Caco-2 (cell line): ENCODE measurements at regions of chr2 and their contacts with region 1.

Region 1: DNA sequence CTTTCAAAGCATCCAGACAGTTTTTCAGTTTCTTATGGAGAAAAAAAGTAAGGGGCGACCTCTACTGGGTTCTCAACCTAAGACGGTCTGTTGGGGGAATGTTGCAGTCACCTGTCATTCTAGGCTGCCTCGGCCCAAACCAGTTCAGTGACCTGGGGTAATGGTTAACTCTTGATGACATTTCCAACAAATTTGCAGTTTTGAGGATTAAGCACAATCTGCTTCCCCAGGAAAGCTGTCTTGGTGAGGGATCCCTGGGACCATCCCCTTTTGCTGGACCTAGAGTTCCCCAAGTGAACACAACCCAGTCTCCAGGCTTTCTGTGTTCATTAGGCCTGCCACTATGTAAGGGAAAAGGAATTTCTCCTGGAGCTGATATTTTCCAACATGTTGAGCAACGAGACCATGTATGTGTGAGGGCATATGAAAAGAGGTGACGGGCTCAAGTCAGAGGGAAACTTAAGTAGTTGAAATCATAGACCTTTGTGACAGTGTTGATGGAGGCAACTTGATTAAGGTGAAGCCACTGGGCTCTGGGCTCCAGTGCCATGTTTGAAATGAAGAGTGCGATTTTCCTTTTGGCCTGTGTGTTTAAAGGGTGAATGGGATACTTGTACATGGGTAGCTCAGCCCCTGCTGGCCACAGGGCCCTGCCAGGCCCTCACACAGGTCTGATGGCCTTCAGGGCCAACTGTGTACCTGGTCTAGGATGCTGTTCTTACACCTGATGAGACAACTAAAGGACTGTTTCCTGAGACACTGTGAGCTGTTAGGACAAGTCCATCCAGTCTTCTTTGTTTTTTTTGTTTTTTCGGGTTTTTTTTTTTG is 27.0 kb downstream of the FOSL2 start:
- DNase-seq: peak; percentile 85 to 86
- H3K4me3 ChIP-seq: no peak overlapping the region
- H3K4me3 Mint-ChIP-seq: peak overlapping the region; percentile 52
- H3K27ac Mint-ChIP-seq: peak overlapping the region; percentile 93
- H3K4me1 ChIP-seq: peaks cover 23% of the 10 kb centered on the region
- H3K4me1 Mint-ChIP-seq: peaks cover 19% of the 10 kb centered on the region
- H3K27me3 ChIP-seq: no peaks in the 10 kb centered on the region
- H3K27me3 Mint-ChIP-seq: no peaks in the 10 kb centered on the region
- CTCF ChIP-seq: peak; percentile 32 to 47

Region 2: DNA sequence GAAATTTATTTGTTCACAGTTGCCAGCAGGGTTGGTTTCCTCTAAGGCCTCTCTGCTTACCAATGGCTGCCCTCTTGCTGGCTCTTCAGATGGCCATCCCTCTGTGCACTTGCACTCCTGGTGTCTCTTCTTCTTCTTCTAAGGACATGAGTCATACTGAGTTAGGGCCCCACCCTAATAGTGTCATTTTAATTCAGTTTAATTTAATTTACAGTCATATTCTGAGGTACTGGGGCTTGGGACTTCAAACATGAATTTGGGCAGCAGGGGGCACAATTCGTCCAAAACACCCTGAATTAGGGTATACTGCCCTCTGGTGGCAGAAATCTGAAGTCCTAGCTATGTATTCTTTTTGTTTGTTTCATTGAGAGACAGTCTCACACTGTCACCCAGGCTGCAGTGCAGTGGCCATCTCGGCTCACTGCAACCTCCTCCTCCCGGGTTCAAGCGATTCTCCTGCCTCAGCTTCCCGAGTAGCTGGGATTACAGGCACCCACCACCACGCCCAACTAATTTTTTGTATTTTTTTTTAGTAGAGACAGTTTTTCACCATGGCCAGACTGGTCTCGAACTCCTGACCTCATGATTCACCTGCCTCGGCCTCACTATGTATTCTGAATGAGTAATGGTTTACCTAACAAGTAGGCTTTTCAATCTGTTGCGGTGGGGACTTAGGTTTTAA is 736.1 kb before region 1 on chr2:
- CTCF ChIA-PET with region 1: interaction called, 11 read pairs
- POLR2A ChIA-PET with region 1: no interaction called
- intact Hi-C with region 1: no loop called
- DNase-seq: peak; percentile 82 to 93
- H3K4me3 ChIP-seq: no peak overlapping the region
- H3K4me3 Mint-ChIP-seq: no peak overlapping the region
- H3K27ac Mint-ChIP-seq: peak overlapping the region; percentile 81
- H3K4me1 ChIP-seq: peaks cover 28% of the 10 kb centered on the region
- H3K4me1 Mint-ChIP-seq: peaks cover 14% of the 10 kb centered on the region
- H3K27me3 ChIP-seq: no peaks in the 10 kb centered on the region
- H3K27me3 Mint-ChIP-seq: no peaks in the 10 kb centered on the region
- CTCF ChIP-seq: peak; percentile 99 to 100

Region 3: GRCh38 chr2:27723372-27724144 is 696.1 kb before region 1 on chr2:
- CTCF ChIA-PET with region 1: interaction called, 4 read pairs
- POLR2A ChIA-PET with region 1: no interaction called
- intact Hi-C with region 1: loop called (anchors 1 kb)
- DNase-seq: peak; percentile 78 to 81
- H3K4me3 ChIP-seq: no peak overlapping the region
- H3K4me3 Mint-ChIP-seq: no peak overlapping the region
- H3K27ac Mint-ChIP-seq: peak overlapping the region; percentile 80
- H3K4me1 ChIP-seq: peaks cover 60% of the 10 kb centered on the region
- H3K4me1 Mint-ChIP-seq: peaks cover 48% of the 10 kb centered on the region
- H3K27me3 ChIP-seq: no peaks in the 10 kb centered on the region
- H3K27me3 Mint-ChIP-seq: no peaks in the 10 kb centered on the region
- CTCF ChIP-seq: peak; percentile 85 to 87

Region 4: DNA sequence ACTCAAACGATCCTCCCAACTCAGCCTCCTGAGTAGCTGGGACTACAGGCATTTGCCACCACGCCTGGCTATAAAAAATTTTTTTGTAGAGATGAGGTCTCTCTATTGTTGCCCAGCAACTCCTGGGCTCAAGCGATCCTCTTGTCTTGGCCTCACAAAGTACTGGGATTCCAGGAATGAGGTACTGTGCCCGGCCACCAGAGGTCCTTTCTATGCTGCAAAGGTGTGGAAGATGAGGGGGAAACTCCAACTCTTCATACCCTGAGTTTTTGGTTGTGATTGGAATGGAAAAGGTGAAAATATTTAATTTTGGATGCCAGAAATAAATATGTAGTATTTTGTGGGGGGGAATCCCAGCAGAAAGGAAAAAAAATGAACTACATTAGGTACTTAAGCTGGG is 612.2 kb before region 1 on chr2:
- CTCF ChIA-PET with region 1: no interaction called
- POLR2A ChIA-PET with region 1: no interaction called
- intact Hi-C with region 1: loop called (anchors 1 kb)
- DNase-seq: peak; percentile 55 to 59
- H3K4me3 ChIP-seq: no peak overlapping the region
- H3K4me3 Mint-ChIP-seq: no peak overlapping the region
- H3K27ac Mint-ChIP-seq: no peak overlapping the region
- H3K4me1 ChIP-seq: peaks cover 16% of the 10 kb centered on the region; the same call in 1 of the 2 replicates
- H3K4me1 Mint-ChIP-seq: no peaks in the 10 kb centered on the region
- H3K27me3 ChIP-seq: no peaks in the 10 kb centered on the region
- H3K27me3 Mint-ChIP-seq: no peaks in the 10 kb centered on the region
- CTCF ChIP-seq: peak; percentile 48 to 66

Region 5: DNA sequence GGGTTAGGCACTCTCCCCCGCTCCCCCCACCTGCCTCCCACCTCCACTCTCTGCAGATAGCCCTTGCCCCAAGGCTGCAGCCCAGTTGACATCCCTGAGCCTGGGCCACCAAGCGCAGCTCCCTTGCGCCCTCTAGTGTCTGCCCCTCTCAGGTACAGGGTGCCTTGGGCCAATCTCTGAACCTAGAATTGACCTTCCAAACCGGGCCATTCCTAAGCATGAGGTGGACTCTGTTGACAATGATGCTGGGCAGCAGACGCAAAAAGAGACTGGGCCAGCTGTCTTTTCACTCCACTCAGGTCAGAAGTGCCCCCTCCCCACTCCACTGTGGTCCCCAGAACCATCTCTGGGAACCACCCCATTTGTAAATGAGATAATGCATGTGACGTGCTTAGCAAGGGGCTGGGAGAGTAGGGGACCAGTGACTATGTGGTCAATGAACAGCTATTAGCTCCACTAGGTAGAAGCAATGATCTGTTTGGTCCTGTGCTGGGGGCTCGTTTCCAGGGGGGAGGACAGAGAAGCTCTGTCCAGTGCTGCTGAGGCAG is 33.0 kb after region 1 on chr2:
- CTCF ChIA-PET with region 1: interaction called, 3 read pairs
- POLR2A ChIA-PET with region 1: interaction called, 5 read pairs
- intact Hi-C with region 1: loop called (anchors 1 kb)
- DNase-seq: peak; percentile 72 to 84
- H3K4me3 ChIP-seq: no peak overlapping the region
- H3K4me3 Mint-ChIP-seq: no peak overlapping the region
- H3K27ac Mint-ChIP-seq: no peak overlapping the region
- H3K4me1 ChIP-seq: 0 out of 2 replicates have a peak, but pooled peaks cover 4% of the 10 kb centered on the region
- H3K4me1 Mint-ChIP-seq: peaks cover 13% of the 10 kb centered on the region
- H3K27me3 ChIP-seq: no peaks in the 10 kb centered on the region
- H3K27me3 Mint-ChIP-seq: no peaks in the 10 kb centered on the region
- CTCF ChIP-seq: peak; percentile 90 to 94

Region 6: GRCh38 chr2:29014811-29015421 is 595.3 kb after region 1 on chr2:
- CTCF ChIA-PET with region 1: no interaction called
- POLR2A ChIA-PET with region 1: no interaction called
- intact Hi-C with region 1: no loop called
- DNase-seq: no peak
- H3K4me3 ChIP-seq: no peak overlapping the region
- H3K4me3 Mint-ChIP-seq: no peak overlapping the region
- H3K27ac Mint-ChIP-seq: no peak overlapping the region
- H3K4me1 ChIP-seq: no peaks in the 10 kb centered on the region
- H3K4me1 Mint-ChIP-seq: no peaks in the 10 kb centered on the region
- H3K27me3 ChIP-seq: no peaks in the 10 kb centered on the region
- H3K27me3 Mint-ChIP-seq: no peaks in the 10 kb centered on the region
- CTCF ChIP-seq: no peak

Region 7: DNA sequence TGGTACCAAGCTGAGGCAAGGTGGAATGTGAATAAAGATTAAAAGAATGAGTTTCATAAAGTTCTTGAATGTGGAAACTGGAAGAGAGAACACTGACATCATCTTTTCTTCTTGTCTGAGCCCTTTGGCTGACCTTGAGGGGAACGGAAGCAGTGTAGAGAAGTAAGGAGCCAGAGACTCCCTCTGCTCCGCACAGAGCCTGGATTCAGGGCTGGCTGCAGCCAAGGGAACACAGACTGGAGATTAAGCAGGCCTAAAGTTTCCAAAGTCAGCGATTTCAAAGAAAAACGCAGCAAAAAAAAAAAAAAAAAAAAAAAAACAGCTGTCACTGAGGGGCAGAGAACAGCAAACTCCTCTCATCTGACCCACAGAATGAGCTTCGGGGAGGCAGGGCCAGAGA is 1521.0 kb after region 1 on chr2:
- CTCF ChIA-PET with region 1: no interaction called
- POLR2A ChIA-PET with region 1: no interaction called
- intact Hi-C with region 1: no loop called
- DNase-seq: no peak
- H3K4me3 ChIP-seq: no peak overlapping the region
- H3K4me3 Mint-ChIP-seq: no peak overlapping the region
- H3K27ac Mint-ChIP-seq: no peak overlapping the region
- H3K4me1 ChIP-seq: no peaks in the 10 kb centered on the region
- H3K4me1 Mint-ChIP-seq: no peaks in the 10 kb centered on the region
- H3K27me3 ChIP-seq: no peaks in the 10 kb centered on the region
- H3K27me3 Mint-ChIP-seq: peaks cover 13% of the 10 kb centered on the region
- CTCF ChIP-seq: no peak